Right ventricle myocardium inferior (tissue), 1 donor: ENCODE measurements at regions of chr17 and their contacts with region 1.

Region 1: DNA sequence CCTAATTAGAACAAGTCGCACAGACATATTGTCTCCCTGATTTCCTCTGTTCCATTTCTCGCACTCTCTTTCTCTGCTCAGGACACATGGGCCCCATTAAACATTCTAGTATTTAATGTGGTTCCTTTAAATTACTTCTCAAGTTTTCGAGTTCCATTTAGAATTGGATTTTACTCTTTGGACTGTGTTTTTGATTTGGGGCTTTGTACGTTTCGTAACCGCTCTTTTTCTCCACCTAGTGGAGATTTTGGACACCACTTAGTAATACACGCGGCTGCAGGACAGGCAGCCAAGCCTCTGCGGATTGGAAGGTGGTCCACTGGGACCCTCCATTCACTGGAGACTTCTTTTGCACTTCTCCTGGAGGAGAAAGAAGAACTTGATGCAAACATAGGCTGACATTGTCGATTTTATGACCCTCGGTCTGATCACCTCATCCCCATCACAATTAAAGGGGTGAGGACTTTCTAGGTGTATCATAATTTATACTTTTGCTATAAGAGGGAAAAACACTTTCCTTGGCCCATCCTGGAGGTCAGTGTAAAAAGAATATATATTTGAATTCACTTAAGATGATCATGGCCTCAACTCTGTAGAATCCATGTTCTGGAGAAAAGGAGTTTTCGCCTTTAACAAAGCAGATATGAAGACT is 85.7 kb downstream of the NOG start:
- DNase-seq: no peak
- ATAC-seq: no peak

Region 2: DNA sequence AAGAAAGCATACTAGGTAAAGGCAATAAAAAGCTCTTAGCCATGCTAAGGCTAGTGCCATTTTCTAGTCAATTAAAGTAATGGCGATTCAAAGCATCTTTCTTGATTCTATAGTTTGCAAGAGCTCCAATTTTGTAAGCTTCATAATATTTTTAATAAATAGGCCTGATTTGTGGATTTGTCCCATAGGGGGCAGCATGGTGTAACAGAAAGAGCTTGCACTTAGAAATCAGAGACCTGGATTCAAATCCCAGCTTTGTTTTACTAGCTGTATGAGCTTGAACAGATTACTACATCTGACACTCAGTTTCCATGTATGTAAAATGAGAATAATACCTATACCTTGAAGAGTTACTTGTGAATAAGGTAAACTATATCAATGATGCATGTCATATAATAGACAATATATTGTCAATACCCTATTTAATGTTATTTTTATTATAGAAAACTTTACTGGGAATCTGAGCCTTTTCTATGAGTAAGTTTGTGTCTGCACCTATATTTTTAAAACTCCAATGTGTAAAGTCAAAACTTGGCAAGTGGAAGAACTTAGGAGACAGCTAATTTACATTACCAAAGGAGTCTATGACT is 179.3 kb before region 1 on chr17:
- intact Hi-C with region 1: loop called (anchors 10 kb)
- DNase-seq: no peak
- ATAC-seq: no peak

Region 3: DNA sequence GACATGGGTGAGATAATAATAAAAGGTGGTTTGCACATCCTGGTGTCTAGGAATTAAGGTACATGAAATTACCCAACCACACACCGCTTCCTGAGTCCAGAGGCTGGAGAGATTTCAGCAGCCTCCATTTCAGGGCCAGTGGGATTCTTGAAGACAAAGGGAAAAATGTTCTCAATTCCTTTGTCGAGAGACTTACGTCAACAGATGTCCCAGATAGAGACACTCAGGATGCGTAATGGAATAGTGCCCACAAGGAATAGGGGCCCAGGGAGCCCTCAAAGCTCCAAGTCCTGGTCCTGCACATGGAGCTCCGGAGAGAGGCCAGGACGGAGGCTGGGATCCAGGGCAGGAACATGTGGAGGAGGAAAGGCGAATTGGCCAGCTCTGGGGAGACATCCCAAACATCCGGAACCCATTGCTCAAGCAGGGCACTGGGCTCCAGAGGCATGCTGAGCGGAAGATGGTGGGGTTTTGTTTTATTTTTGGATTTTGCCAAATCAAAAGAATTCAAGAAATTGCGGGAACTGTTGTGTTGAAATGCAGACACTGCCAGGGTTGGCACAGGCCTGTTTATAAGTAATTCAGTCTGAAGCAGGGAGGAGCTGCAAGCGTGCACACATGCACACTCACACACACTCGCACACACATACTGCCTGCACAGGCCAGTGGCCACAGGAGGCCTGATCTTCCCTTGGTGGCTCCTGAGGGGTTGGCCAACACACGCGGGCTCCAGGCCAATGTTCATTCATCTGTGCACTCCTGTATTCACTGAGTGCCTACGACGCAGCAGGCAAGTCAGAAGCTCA is 11.4 kb after region 1 on chr17:
- intact Hi-C with region 1: no loop called
- DNase-seq: no peak
- ATAC-seq: no peak